Naive thymus-derived CD4-positive, alpha-beta T cell (primary cell): ENCODE measurements at regions of chr10 and their contacts with region 1.

Region 1: GRCh38 chr10:102743588-102744373 is at the start of gene WBP1L:
- DNase-seq: peak; percentile 77 to 98 (median 96)
- ATAC-seq: peak; percentile 98
- H3K4me3 ChIP-seq: peak within 1 kb of the TSS; percentile 85
- H3K4me3 Mint-ChIP-seq: peak within 1 kb of the TSS; percentile 80 to 97 (median 93)
- H3K27ac ChIP-seq: peak within 1 kb of the TSS; percentile 77
- H3K27ac Mint-ChIP-seq: peak within 1 kb of the TSS; percentile 57 to 96 (median 90)
- H3K4me1 ChIP-seq: peaks cover 17 to 25% of the 10 kb centered on the region in 2 donors
- H3K4me1 Mint-ChIP-seq: peaks cover 33 to 59% (median 48%) of the 10 kb centered on the region in 7 donors
- H3K27me3 ChIP-seq: no peaks in the 10 kb centered on the region
- H3K27me3 Mint-ChIP-seq: no peaks in the 10 kb centered on the region
- total RNA-seq, gene WBP1L: 20.5 to 37.9 (median 34.1) TPM

Region 2: DNA sequence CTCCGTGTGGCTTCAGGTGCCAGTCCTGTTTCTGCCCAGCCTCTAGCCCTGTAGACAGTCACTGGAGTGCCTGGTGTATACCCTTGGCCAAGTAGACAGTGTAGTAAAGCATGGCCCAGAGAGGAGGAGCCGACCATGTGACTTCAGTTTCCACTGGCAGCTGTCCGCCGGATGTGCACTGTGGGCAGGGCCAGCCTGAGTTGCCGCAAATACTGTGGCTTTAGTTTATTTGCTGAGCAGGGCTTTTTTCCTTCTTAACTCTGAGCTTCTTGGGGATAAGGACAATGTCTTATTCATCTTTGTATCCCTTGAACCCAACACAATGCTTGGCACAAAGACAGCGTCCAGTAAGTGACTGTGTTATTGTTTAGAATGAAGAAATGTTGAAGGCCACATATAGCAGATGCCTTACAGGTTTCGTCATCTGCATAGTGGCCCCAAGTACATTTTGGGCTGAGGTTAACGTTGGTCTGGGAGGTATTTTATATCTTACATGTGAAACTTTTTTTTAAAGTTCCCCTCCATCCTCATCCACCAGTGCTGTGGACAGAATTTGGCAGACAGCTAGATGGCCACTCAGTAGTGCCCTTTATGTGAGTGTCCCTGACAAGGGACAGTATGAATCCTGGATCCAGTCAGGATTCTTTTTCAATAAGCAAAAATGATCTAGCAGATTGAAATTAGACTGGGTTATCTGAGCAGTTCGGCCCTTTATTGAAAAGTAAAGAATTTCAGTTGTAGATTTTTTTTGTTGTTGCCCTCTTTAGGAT is 52.8 kb after region 1 on chr10:
- CTCF ChIA-PET with region 1: no interaction called
- POLR2A ChIA-PET with region 1: no interaction called
- intact Hi-C with region 1: loop called in 1 of 2 experiments (anchors 1 kb)
- DNase-seq: peak in 8 of 9 donors; percentile 9 to 55 (median 34)
- ATAC-seq: peak; percentile 95
- H3K4me3 ChIP-seq: peak overlapping the region; percentile 17
- H3K4me3 Mint-ChIP-seq: peak overlapping the region; percentile 33 to 66 (median 54)
- H3K27ac ChIP-seq: peak overlapping the region; percentile 1
- H3K27ac Mint-ChIP-seq: peak overlapping the region; percentile 28 to 79 (median 47)
- H3K4me1 ChIP-seq: peaks cover 13 to 24% of the 10 kb centered on the region in 2 donors
- H3K4me1 Mint-ChIP-seq: peaks cover 26 to 60% (median 52%) of the 10 kb centered on the region in 7 donors
- H3K27me3 ChIP-seq: no peaks in the 10 kb centered on the region
- H3K27me3 Mint-ChIP-seq: no peaks in the 10 kb centered on the region